ENCODE measurements at regions of chr17 and their contacts with region 1.

Region 1: DNA sequence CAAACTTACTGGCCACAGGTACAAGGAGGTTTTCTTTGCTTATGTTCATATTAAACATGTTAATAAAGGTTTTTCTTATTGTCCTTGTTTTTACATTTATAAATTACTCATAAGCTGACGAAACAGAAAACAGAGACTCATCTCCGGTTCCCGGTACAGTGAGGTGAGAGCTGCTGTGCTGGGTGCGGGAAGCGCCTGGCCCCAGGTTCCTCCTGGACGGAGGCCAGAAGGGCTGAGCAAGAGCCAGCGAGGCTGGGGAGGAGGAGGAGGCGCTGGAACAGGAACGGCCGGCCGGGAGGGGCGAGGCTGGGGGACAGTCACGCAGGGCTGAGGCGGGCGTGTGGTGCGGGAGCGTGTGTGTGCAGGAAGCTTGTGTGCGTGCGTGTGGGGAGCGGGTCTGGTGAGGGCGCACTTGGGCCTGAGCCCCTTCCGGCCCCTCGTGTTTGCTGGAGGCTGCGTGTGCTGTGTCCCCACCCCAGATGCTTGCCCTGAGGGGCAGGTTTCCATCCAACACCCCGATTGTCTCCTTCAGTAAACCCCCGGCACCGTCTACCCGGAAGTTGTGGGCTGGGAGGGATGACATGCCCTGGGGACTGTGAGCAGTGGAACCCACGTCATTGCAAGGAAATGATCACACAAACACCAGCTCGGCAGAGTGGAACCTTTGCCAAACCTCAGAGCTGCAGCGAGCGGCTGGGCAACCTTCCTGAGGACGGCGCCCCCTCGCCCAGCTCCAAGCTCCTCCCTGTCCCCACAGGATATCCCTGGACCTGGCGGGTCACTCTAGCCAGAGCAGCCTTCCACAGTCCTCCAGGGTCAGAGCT is 19.5 kb downstream of the CD7 start:
- DNase-seq: peak; percentile 97
- ATAC-seq: peak; percentile 60
- H3K4me3 ChIP-seq: peak overlapping the region; percentile 69
- H3K27ac ChIP-seq: peak overlapping the region; percentile 99
- H3K4me1 ChIP-seq: peaks cover 54% of the 10 kb centered on the region
- H3K27me3 ChIP-seq: no peaks in the 10 kb centered on the region
- CTCF ChIP-seq: 0 out of 2 replicates have a peak, but pooled peaks have one; percentile 12

Region 2: GRCh38 chr17:82246365-82247174 is 51.4 kb before region 1 on chr17:
- CTCF ChIA-PET with region 1: no interaction called
- POLR2A ChIA-PET with region 1: interaction called, 3 read pairs
- intact Hi-C with region 1: loop called (anchors 2 kb)
- DNase-seq: peak; percentile 94
- ATAC-seq: peak; percentile 63
- H3K4me3 ChIP-seq: no peak overlapping the region
- H3K27ac ChIP-seq: peak overlapping the region; percentile 94
- H3K4me1 ChIP-seq: peaks cover 30% of the 10 kb centered on the region
- H3K27me3 ChIP-seq: no peaks in the 10 kb centered on the region
- CTCF ChIP-seq: no peak

Region 3: GRCh38 chr17:82332669-82333278 is 34.8 kb after region 1 on chr17:
- CTCF ChIA-PET with region 1: no interaction called
- POLR2A ChIA-PET with region 1: interaction called, 3 read pairs
- intact Hi-C with region 1: loop called (anchors 5 kb)
- DNase-seq: peak; percentile 66
- ATAC-seq: peak; percentile 26
- H3K4me3 ChIP-seq: peak overlapping the region; percentile 76
- H3K27ac ChIP-seq: peak overlapping the region; percentile 68
- H3K4me1 ChIP-seq: peaks cover 40% of the 10 kb centered on the region
- H3K27me3 ChIP-seq: no peaks in the 10 kb centered on the region
- CTCF ChIP-seq: no peak

Region 4: DNA sequence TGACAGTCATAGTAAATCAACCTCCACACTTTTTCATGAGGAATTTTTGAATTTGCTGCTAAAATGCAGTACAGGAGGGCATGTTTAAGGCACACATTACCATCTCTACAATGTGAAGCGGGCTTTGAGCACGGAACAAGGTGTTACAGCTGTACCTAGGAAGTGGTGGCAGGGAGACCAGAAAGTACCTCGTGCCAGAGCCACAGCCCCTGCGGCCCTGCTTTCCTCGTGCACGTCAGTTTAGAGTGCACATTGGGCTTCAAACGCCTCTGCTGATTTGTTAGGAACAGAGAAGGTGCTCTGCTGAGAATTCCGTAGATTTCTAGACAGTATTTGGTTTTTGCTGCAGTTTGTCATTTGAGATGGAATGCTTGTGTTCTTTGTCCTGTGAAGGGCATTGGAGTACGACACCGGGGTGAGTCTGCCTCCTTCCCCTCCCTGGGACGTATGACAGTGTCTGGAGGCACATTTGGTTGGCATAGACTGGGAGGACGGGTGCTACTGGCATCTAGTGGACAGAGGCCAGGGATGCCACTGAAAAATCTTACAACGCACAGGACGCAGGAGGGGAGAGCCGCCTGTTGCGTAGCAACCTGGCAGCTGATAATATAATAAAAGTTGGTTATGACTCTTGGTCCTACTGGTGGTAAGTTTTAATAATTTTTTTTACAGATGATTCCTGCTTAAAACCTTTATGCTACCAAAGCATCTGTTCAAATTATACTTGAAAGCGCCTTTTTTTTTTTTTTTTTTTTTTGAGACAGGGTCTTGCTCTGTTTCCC is 230.7 kb after region 1 on chr17:
- CTCF ChIA-PET with region 1: interaction called, 3 read pairs
- POLR2A ChIA-PET with region 1: interaction called, 10 read pairs
- intact Hi-C with region 1: no loop called
- DNase-seq: peak; percentile 93
- ATAC-seq: peak; percentile 78
- H3K4me3 ChIP-seq: peak overlapping the region; percentile 16; the same call in 1 of the 2 replicates
- H3K27ac ChIP-seq: peak overlapping the region; percentile 70
- H3K4me1 ChIP-seq: peaks cover 48% of the 10 kb centered on the region
- H3K27me3 ChIP-seq: no peaks in the 10 kb centered on the region
- CTCF ChIP-seq: peak; percentile 84

Measured in PC-3 (cell line).